HEK293 (cell line): ENCODE measurements at regions of chrX and their contacts with region 1.

Region 1: DNA sequence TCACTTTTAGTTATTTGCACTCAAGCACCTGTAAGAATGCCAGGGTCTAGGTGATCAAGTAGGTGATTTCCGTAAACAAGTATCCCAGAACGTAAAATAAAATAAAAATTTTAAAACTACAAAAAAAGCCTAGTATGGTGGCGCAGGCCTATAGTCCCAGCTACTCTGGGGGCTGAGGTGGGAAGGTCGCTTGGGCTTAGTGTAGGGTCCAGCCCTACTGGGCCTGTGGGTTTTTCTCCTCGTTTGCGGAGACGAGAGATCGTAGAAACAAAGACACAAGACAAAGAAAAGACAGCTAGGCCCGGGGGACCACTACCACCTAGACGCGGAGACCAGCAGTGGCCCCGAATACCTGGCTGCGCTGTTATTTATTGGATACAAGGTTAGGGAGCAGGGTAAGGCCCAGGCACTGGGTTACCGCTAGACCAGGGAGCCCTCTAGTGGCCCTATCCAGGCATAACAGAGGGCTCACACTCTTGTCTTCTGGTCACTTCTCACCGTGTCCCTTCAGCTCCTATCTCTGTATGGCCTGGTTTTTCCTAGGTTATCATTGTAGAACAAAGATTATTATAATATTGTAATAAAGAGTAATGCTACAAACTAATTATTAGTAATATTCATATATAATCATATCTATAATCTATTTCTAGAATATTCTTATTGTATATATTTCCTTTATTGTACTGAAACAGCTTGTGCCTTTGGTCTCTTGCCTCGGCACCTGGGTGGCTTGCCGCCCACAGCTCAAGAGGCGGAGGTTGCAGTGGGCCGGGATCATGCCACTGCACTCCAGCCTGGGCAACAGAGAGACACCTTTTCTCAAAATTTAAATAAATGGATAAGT is 38.4 kb downstream of the SAGE1 start:
- H3K4me3 ChIP-seq: no peak overlapping the region
- H3K27ac ChIP-seq: no peak overlapping the region
- H3K4me1 ChIP-seq: no peaks in the 10 kb centered on the region
- CTCF ChIP-seq: peak; percentile 63

Region 2: DNA sequence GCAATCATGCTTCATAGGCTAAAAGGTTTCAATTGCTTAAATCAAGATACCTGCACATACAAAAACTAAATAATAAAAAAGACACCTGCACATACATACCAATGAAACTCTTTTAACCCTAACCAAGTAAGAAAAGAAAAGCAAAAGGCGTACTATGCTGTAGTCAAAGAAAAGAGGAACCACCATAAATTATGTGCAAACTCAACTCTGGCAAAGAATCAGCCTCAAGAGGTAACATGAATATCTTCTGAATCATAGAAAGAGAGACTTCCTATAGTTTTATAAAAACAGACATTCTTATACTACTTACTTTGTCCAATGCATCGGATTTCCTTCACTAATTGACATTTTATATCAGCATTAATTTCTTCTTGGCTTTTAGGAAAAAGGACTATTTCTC is 12.6 kb after region 1 on chrX:
- CTCF ChIA-PET with region 1: interaction called, 25 read pairs
- POLR2A ChIA-PET with region 1: no interaction called
- H3K4me3 ChIP-seq: no peak overlapping the region
- H3K27ac ChIP-seq: no peak overlapping the region
- H3K4me1 ChIP-seq: no peaks in the 10 kb centered on the region
- CTCF ChIP-seq: no peak

Region 3: GRCh38 chrX:136126872-136127406 is 195.1 kb after region 1 on chrX:
- CTCF ChIA-PET with region 1: no interaction called
- POLR2A ChIA-PET with region 1: no interaction called
- H3K4me3 ChIP-seq: no peak overlapping the region
- H3K27ac ChIP-seq: peak overlapping the region; percentile 12; the same call in 1 of the 2 replicates
- H3K4me1 ChIP-seq: peaks cover 10% of the 10 kb centered on the region
- CTCF ChIP-seq: no peak